Breast epithelium (tissue), 4 donors: ENCODE measurements at regions of chr10 and their contacts with region 1.

Region 1: GRCh38 chr10:49264177-49264677 is 34.7 kb upstream of the C10orf71 start:
- DNase-seq: no peak
- H3K4me3 ChIP-seq: no peak overlapping the region
- H3K27ac ChIP-seq: no peak overlapping the region
- H3K4me1 ChIP-seq: no peaks in the 10 kb centered on the region
- H3K27me3 ChIP-seq: peaks cover 0 to 4% of the 10 kb centered on the region in 2 donors
- CTCF ChIP-seq: no peak
- POLR2A ChIP-seq: no peak

Region 2: DNA sequence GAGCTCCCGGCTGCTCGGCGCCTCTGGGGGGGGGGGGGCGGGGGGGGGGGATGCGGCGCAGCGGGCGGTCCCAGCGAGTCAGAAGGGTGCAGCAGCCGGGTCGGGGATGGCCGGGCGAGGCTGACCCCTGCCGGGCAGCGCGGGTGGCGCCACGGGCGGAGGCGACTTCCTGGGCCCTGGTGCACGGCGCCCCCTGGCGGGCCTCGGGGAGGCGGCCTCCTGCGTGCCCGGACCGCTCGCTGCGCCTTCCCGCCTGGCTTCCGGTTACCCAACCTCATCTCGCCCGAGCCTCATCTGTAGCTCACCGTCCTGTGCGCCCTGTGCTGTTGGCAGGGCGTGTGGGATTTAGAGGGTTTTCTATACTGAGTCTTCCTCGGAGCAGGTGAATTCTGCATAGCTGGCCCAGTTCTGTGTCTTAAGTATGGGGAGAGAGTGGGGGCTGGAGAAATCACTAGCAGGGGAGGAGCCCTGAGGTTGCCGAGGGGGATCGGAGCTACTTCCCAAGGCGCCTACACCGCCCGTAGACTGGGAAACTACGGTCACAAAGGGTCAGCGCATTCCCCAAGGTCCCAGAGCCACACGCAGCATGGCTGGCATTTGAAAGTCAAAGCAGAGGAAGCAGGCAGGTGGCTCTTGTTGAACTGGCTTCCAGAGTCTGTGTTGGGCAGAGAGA is 607.9 kb before region 1 on chr10:
- intact Hi-C with region 1: loop called (anchors 5 kb)
- DNase-seq: peak; percentile 81 to 91
- H3K4me3 ChIP-seq: peak overlapping the region; percentile 51 to 74 (median 60)
- H3K27ac ChIP-seq: no peak overlapping the region
- H3K4me1 ChIP-seq: no peaks in the 10 kb centered on the region
- H3K27me3 ChIP-seq: peaks cover 0 to 4% of the 10 kb centered on the region in 2 donors
- CTCF ChIP-seq: peak; percentile 51 to 98 (median 61)
- POLR2A ChIP-seq: no peak